WTC11 (cell line): ENCODE measurements at regions of chr4 and their contacts with region 1.

Region 1: DNA sequence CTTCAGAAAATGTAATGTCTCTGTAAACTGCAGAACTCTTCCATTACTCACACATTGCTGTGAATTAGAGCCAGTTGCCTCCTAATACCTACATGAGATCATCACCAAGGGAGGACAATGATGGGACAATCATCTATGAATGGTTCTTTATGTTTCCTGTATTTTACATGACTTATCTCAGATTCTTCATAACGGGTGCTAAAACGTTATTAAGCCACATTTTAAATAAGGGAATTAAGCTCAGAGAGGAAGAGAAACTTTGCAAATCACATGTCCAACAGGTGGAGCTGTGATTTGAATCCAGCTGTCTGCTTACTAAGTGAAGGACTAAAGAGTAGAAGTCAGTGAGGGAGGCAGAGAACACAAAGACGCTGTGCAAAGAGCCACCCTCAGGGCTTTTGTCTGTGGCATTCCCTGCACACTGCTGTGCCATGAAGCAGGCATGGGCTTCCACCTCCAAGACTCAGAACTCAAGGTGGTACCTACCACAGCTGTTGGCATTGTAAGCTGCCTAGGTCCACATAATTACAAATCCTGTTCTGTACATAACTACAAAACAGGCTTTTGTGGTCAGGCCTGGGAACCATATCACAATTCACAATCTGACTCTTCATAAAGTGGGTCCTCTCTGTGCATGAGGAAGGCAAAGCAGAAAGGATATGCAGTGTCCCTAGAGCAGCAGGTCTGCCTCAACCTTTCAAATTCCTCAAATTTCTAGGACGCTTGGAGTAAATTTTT is 12.8 kb downstream of the TBC1D9 start:
- DNase-seq: no peak
- ATAC-seq: peak; percentile 82
- H3K4me3 Mint-ChIP-seq: no peak overlapping the region
- H3K27ac Mint-ChIP-seq: no peak overlapping the region
- H3K4me1 Mint-ChIP-seq: peaks cover 54% of the 10 kb centered on the region
- H3K27me3 Mint-ChIP-seq: no peaks in the 10 kb centered on the region
- CTCF ChIP-seq: no peak

Region 2: GRCh38 chr4:140523857-140524742 is 219.3 kb before region 1 on chr4 and contains the start of gene ELMOD2:
- CTCF ChIA-PET with region 1: no interaction called
- POLR2A ChIA-PET with region 1: no interaction called
- DNase-seq: peak; percentile 98
- ATAC-seq: peak; percentile 100
- H3K4me3 Mint-ChIP-seq: peak within 1 kb of the TSS; percentile 86
- H3K27ac Mint-ChIP-seq: peak within 1 kb of the TSS; percentile 74
- H3K4me1 Mint-ChIP-seq: peaks cover 9% of the 10 kb centered on the region
- H3K27me3 Mint-ChIP-seq: peaks cover 28% of the 10 kb centered on the region
- CTCF ChIP-seq: peak; percentile 81
- total RNA-seq, gene ELMOD2: 27.4 to 33.6 TPM (median 30.5 TPM) in 3 replicates

Region 3: DNA sequence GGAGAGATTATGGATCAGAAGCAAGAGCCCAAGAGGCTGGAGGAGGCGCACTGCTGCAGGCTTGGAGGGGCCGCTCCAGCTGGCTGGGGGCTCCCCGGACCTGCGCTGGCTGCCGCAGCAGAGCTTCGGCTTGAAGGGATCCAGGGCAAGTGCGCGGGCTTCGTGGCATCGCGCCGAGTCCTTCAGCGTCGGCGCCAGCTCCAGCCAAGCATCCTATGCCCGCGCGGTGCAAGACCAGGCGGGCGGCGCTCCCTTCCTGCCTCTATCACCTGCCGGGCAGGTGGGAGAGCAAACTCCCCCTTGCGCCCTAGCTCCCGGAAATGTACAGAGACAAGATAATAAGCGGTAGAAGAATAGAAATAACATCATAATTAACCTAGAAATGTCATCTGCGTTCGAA is 164.1 kb before region 1 on chr4:
- CTCF ChIA-PET with region 1: no interaction called
- POLR2A ChIA-PET with region 1: interaction called, 10 read pairs
- DNase-seq: peak; percentile 30
- ATAC-seq: peak; percentile 67
- H3K4me3 Mint-ChIP-seq: no peak overlapping the region
- H3K27ac Mint-ChIP-seq: no peak overlapping the region
- H3K4me1 Mint-ChIP-seq: no peaks in the 10 kb centered on the region
- H3K27me3 Mint-ChIP-seq: peaks cover 28% of the 10 kb centered on the region
- CTCF ChIP-seq: no peak

Region 4: DNA sequence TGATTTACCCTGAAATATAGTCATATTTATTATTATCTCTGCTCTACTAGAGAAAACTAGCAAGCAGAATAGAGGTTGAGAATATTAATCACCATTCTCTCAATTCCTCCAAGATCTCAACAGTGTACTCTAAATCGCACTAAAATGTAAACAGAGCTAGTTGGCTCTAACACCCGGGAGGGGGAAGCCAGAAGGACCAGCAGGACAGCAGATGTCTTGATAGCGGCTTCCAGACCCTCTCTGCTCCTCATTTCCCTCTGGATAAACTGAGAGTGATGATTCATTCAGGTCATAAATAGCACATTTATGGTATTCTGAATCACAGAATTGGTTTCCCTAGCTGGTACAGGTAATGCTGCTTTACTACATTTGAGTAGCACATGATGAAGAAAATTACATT is 69.6 kb before region 1 on chr4:
- CTCF ChIA-PET with region 1: no interaction called
- POLR2A ChIA-PET with region 1: no interaction called
- DNase-seq: no peak
- ATAC-seq: no peak
- H3K4me3 Mint-ChIP-seq: no peak overlapping the region
- H3K27ac Mint-ChIP-seq: no peak overlapping the region
- H3K4me1 Mint-ChIP-seq: no peaks in the 10 kb centered on the region
- H3K27me3 Mint-ChIP-seq: no peaks in the 10 kb centered on the region; the same call in 1 of the 2 replicates
- CTCF ChIP-seq: no peak

Region 5: GRCh38 chr4:140756319-140757231 is 13.2 kb after region 1 on chr4 and contains the start of gene TBC1D9:
- CTCF ChIA-PET with region 1: interaction called, 13 read pairs
- POLR2A ChIA-PET with region 1: interaction called, 3 read pairs
- DNase-seq: peak; percentile 82
- ATAC-seq: peak; percentile 76
- H3K4me3 Mint-ChIP-seq: peak within 1 kb of the TSS; percentile 70
- H3K27ac Mint-ChIP-seq: no peak within 1 kb of the TSS; the same call in 1 of the 2 replicates
- H3K4me1 Mint-ChIP-seq: peaks cover 15% of the 10 kb centered on the region
- H3K27me3 Mint-ChIP-seq: peaks cover 95% of the 10 kb centered on the region
- CTCF ChIP-seq: no peak
- total RNA-seq, gene TBC1D9: 0.57 to 0.73 TPM (median 0.70 TPM) in 3 replicates